ENCODE measurements at regions of chr2 and their contacts with region 1.

Region 1: GRCh38 chr2:240232961-240233893 is 92.8 kb upstream of the OTOS start:
- DNase-seq: peak; percentile 84
- H3K4me3 ChIP-seq: peak overlapping the region; percentile 39 to 52 (median 50)
- H3K27ac ChIP-seq: no peak overlapping the region
- H3K4me1 ChIP-seq: peaks cover 24% of the 10 kb centered on the region
- H3K27me3 ChIP-seq: no peaks in the 10 kb centered on the region
- CTCF ChIP-seq: peak; percentile 64 to 93

Region 2: DNA sequence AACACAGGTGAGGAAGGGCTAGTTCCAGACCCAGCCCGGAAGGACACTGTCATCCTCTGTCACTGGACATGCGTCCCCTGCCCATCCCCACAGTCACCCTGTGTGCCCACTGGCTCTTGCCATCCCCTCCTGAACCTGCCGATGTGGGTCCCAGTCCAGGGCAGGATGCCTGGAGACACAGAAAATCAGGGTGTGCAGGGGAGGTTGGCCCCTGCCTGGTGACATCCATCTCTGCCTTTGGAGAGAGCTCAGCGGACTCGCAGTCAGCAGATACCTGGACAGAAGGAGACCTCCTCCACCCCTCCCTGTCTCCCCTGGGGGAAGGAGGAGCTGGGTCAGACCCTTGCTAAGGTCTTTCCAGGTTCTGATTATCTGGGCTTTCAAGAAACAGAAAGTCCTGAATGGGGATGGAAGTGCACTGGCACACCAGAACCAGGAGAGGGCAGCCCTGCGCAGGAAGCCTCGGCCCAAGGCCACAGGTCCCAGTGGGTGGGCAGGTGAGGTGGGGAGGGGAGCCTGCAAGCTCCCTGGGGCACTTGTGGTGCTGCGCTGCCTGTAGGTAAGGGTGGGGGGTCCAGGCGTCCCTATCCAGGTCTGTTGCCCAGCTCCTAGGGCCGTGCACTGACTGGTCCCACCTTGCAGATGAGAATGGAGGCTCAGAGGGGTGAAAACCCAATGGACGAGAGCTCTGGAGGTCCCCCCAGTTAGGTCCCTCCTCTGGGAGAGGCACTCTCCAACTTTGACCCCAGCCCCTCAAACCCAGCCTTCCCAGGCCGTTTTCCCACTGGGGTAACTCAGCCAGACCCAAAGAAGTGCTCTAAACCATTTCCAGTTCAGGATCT is 83.1 kb before region 1 on chr2:
- CTCF ChIA-PET with region 1: no interaction called
- dilution Hi-C with region 1: no loop called
- in situ Hi-C with region 1: no loop called
- intact Hi-C with region 1: loop called (anchors 5 kb)
- DNase-seq: no peak
- H3K4me3 ChIP-seq: no peak overlapping the region
- H3K27ac ChIP-seq: no peak overlapping the region
- H3K4me1 ChIP-seq: no peaks in the 10 kb centered on the region
- H3K27me3 ChIP-seq: peaks cover 3% of the 10 kb centered on the region
- CTCF ChIP-seq: peak; percentile 80 to 94

Region 3: GRCh38 chr2:240293557-240294461 is 60.6 kb after region 1 on chr2:
- CTCF ChIA-PET with region 1: no interaction called
- dilution Hi-C with region 1: no loop called
- in situ Hi-C with region 1: no loop called
- intact Hi-C with region 1: no loop called
- DNase-seq: no peak
- H3K4me3 ChIP-seq: no peak overlapping the region
- H3K27ac ChIP-seq: no peak overlapping the region
- H3K4me1 ChIP-seq: no peaks in the 10 kb centered on the region
- H3K27me3 ChIP-seq: no peaks in the 10 kb centered on the region
- CTCF ChIP-seq: no peak

Region 4: DNA sequence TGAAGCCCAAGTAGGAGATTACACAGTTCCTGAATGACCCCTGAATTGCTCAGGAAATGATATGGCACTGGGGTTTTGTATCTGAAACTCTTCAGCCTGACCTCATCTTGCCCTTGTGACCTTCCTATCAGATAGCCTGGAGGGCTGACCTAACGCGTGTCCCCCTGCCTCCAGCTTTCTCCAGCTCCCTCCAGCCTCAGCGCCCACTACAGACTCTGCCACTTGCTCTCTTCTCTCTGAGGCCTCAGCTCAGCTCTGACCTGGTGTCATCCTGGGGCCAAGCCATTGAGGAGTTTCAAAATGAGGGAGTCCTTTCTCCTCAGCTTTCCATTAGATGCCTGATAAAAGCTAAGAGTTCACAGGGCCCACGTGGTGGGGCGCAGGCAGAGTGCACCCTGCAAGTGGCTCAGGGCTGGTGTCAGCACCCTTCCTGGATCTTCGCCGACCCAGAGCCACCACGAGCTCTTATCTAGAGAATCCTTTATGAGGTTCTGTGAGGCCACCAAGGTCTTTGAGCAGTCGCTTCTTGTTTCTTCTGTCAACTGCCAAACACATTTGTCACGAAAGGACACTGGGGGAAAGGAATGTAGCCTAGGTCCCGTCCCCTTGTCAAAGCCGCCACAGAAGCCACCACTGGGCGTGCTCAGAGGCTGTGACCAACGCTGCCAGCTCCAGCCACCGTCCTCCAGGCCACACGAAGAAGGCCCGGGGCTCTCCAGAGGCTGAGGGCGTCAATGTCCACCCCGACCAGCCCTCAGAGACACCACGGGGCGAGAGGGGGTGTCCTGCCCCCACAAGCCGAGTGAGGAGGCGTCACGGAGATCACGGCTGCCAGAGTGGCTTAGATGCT is 70.9 kb after region 1 on chr2:
- CTCF ChIA-PET with region 1: interaction called, 13 read pairs
- dilution Hi-C with region 1: no loop called
- in situ Hi-C with region 1: no loop called
- intact Hi-C with region 1: no loop called
- DNase-seq: no peak
- H3K4me3 ChIP-seq: no peak overlapping the region
- H3K27ac ChIP-seq: no peak overlapping the region
- H3K4me1 ChIP-seq: no peaks in the 10 kb centered on the region
- H3K27me3 ChIP-seq: no peaks in the 10 kb centered on the region
- CTCF ChIP-seq: no peak

Region 5: DNA sequence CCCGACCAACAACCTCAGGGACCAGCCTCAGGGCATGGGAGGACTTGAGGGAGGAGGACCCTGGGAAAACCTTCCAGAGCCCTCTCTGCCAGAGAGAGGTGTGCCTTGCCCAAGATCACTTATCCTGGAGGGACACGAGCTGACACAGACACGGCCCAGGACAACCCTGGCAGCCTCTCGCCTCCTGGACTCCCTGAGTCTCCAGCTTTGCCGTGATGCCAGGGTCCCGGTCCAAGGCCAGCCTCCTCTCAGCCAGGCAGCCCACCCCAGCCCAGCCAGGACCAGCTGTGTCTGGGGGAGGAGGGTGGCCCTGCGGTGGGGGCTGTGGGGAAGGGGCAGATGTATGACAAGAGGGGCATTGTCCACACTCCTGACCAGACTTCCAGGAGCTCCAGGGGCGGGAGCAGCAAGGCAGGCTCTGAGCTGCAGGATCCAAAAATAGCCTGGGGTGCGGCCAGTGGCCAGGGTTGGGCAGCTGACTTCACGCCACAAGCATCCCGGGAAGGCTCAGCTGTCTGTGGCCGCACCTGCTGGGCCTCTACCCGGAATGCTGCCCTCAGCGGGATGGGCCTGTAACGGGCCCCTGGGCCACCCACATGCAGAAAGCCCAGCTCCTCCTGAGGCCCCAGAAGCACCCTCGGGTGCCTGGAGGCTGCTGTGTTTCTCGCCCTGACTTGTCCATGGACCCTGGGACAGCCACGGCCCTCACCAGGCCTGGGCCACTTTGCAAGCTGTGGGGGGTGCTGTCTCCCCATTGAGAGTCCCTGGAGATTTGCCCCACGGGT is 136.8 kb after region 1 on chr2:
- CTCF ChIA-PET with region 1: no interaction called
- dilution Hi-C with region 1: no loop called
- in situ Hi-C with region 1: no loop called
- intact Hi-C with region 1: loop called (anchors 1 kb)
- DNase-seq: peak; percentile 94
- H3K4me3 ChIP-seq: no peak overlapping the region
- H3K27ac ChIP-seq: peak overlapping the region; percentile 75
- H3K4me1 ChIP-seq: peaks cover 32% of the 10 kb centered on the region
- H3K27me3 ChIP-seq: no peaks in the 10 kb centered on the region
- CTCF ChIP-seq: peak in 1 of 2 donors; percentile 16

Region 6: GRCh38 chr2:240499309-240500301 is 266.4 kb after region 1 on chr2:
- CTCF ChIA-PET with region 1: no interaction called
- dilution Hi-C with region 1: no loop called
- in situ Hi-C with region 1: no loop called
- intact Hi-C with region 1: loop called (anchors 1 kb)
- DNase-seq: no peak
- H3K4me3 ChIP-seq: no peak overlapping the region
- H3K27ac ChIP-seq: no peak overlapping the region
- H3K4me1 ChIP-seq: no peaks in the 10 kb centered on the region
- H3K27me3 ChIP-seq: no peaks in the 10 kb centered on the region
- CTCF ChIP-seq: no peak

Region 7: DNA sequence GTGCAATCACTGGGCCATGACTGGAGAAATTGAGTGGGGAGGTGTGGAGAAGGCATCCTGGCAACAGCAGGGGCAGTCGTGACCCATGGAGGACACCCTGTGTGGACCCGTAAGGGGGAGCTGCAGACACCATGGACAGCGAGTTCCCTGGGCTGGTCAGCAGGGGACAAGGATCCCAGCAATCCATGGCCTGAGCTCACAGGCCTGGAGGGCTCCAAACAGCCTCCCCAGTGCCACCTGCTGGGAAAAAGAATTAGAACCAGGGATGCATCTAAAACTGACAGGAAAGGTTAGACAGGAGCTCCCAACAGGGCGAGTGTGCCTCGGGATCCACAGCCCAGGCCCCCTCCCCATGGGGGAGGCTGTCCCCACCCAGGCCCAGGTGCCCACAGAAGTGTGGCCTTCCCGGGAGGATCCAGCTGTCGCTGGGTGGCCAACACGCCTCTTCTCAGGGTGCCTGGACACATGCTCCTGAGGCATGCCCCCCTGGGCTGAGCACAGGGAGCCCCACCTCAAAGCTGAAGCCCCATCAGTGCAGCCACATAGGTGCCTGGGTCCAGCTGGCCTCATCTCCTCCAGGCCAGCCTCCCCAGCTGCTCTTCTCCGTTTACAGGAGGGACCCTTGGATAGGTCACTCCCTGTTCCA is 607.3 kb after region 1 on chr2:
- CTCF ChIA-PET with region 1: no interaction called
- dilution Hi-C with region 1: no loop called
- in situ Hi-C with region 1: no loop called
- intact Hi-C with region 1: loop called (anchors 5 kb)
- DNase-seq: peak; percentile 40
- H3K4me3 ChIP-seq: no peak overlapping the region
- H3K27ac ChIP-seq: no peak overlapping the region
- H3K4me1 ChIP-seq: no peaks in the 10 kb centered on the region
- H3K27me3 ChIP-seq: peaks cover 7% of the 10 kb centered on the region
- CTCF ChIP-seq: peak; percentile 58 to 76

Measured in mammary epithelial cell (primary cell).